ENCODE measurements at regions of chr17 and their contacts with region 1.

Region 1: DNA sequence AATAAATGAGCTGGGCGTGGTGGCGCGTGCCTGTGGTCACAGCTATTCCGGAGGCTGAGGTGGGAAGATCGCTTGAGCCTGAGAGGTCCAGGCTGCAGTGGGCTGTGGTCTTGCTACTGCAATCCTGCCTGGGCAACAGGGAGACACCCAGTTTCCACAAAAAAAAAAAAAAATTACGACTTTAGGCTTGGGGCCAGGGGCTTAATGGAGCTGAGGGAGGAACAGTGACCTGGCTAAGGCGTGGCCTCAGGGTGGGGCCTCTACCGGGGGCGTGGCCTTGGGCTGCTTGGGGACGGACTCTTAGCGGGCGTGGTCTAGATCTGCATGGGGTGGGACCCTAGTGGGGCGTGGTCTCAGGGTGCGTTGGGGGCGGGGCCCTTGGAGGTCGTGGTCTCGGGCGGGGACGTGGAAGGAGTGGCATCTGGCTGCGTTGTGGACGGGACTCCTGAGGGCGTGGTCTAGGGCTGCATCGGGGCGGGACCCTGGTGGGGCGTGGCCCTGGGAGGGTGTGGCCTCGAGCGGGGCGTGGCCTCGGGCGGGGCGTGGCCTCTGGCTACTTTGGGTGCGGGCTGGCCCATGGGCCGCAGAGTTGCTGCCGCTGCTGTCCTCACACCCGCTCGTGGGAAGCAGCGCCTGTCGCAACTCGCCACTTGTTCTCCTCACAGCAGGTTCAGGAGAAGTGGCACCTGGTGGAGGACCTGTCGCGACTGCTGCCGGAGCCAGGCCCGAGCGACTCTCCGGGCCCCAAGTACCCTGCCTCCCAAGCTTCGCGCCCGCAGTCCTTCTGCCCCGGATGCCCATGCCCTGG is 5.8 kb upstream of the C17orf99 start:
- DNase-seq: peak; percentile 90 to 100
- ATAC-seq: peak; percentile 61 to 84
- H3K4me3 ChIP-seq: peak overlapping the region; percentile 33
- H3K27ac ChIP-seq: peak overlapping the region; percentile 61 to 87
- H3K4me1 ChIP-seq: peaks cover 46% of the 10 kb centered on the region
- CTCF ChIP-seq: no peak
- EP300 ChIP-seq: no peak
- POLR2A ChIP-seq: peak; percentile 71
- RAD21 ChIP-seq: no peak

Region 2: GRCh38 chr17:77935121-77935571 is 205.2 kb before region 1 on chr17:
- CTCF ChIA-PET with region 1: no interaction called
- POLR2A ChIA-PET with region 1: no interaction called
- DNase-seq: no peak
- ATAC-seq: no peak
- H3K4me3 ChIP-seq: no peak overlapping the region
- H3K27ac ChIP-seq: no peak overlapping the region
- H3K4me1 ChIP-seq: no peaks in the 10 kb centered on the region
- CTCF ChIP-seq: no peak
- EP300 ChIP-seq: no peak
- POLR2A ChIP-seq: no peak
- RAD21 ChIP-seq: no peak

Region 3: GRCh38 chr17:78128551-78129350 is 11.6 kb before region 1 on chr17 and contains the start of gene TMC6:
- CTCF ChIA-PET with region 1: interaction called, 164 read pairs
- POLR2A ChIA-PET with region 1: interaction called, 4 read pairs
- DNase-seq: peak; percentile 56 to 74
- ATAC-seq: peak; percentile 16 to 60
- H3K4me3 ChIP-seq: peak within 1 kb of the TSS; percentile 79
- H3K27ac ChIP-seq: peak within 1 kb of the TSS; percentile 77 to 93
- H3K4me1 ChIP-seq: peaks cover 14% of the 10 kb centered on the region
- CTCF ChIP-seq: no peak
- EP300 ChIP-seq: no peak
- POLR2A ChIP-seq: peak; percentile 38; the same call in 1 of the 2 replicates
- RAD21 ChIP-seq: no peak
- polyA plus RNA-seq, gene TMC6: 4.7 and 5.1 TPM in 2 replicates